Gastrocnemius medialis (tissue), 4 donors: ENCODE measurements at regions of chr1 and their contacts with region 1.

Region 1: DNA sequence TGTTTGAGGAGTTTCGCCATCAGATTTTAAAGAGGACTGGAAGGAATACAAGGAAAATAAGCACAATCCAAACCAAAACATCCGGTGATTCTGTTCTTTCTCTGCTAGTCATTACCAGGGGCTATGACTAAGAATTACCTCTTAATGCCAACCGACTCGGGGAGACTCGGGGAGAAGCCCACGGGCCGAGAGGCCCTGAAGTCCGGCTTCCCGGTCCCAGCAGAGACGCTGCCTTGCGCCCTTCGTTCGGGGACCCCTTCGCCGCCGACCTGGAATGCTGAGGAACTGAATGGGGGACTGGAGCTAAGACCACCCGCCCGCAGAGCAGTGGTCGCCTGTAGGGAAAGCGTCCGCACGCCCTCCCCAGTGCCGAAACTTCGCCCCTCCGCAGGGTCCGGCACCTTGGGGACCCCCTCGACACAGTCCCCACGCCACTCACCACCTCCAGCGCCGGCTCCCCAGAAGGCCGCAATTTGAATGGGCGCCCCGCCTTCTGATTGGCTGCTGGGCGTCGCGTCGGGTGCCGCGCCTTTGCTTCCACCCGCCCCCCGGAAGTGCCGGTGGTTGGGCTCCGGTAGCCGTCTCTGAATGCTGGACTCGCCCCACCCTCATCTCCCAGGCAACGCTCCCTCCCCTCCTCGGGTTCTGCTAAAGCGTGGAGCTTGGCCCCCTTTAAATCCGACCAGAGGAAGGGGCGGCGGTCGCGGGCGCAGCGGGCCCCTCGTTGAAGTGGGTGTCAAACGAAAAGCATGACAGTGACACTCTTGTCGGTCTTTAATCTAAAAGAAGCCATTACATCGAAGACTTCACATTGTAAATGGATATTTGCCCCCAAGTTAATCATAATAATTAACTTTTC is at the start of gene KIF14:
- DNase-seq: peak; percentile 82 to 83
- ATAC-seq: peak; percentile 96 to 98
- H3K4me3 ChIP-seq: peak within 1 kb of the TSS; percentile 74 to 78 (median 74)
- H3K27ac ChIP-seq: peak within 1 kb of the TSS; percentile 20 to 54 (median 46)
- H3K4me1 ChIP-seq: peaks cover 3 to 15% of the 10 kb centered on the region in 2 donors
- H3K27me3 ChIP-seq: no peaks in the 10 kb centered on the region
- CTCF ChIP-seq: no peak
- POLR2A ChIP-seq: no peak
- total RNA-seq, gene KIF14: 0.03 to 0.19 (median 0.07) TPM

Region 2: GRCh38 chr1:200409761-200410565 is 210.5 kb before region 1 on chr1 and contains the start of gene ZNF281:
- in situ Hi-C with region 1: no loop called
- intact Hi-C with region 1: loop called (anchors 5 kb)
- DNase-seq: peak; percentile 86 to 92
- ATAC-seq: peak; percentile 96
- H3K4me3 ChIP-seq: peak within 1 kb of the TSS; percentile 87 to 96 (median 95)
- H3K27ac ChIP-seq: peak within 1 kb of the TSS; percentile 90 to 96 (median 95)
- H3K4me1 ChIP-seq: peaks cover 45 to 51% of the 10 kb centered on the region in 2 donors
- H3K27me3 ChIP-seq: no peaks in the 10 kb centered on the region
- CTCF ChIP-seq: no peak
- POLR2A ChIP-seq: peak; percentile 76 to 80
- total RNA-seq, gene ZNF281: 4.9 to 12.4 (median 9.8) TPM

Region 3: GRCh38 chr1:200738740-200739498 is 118.4 kb after region 1 on chr1 and contains the start of gene CAMSAP2:
- in situ Hi-C with region 1: no loop called
- intact Hi-C with region 1: loop called (anchors 5 kb)
- DNase-seq: peak; percentile 65 to 78
- ATAC-seq: peak; percentile 88 to 91
- H3K4me3 ChIP-seq: peak within 1 kb of the TSS; percentile 71 to 98 (median 94)
- H3K27ac ChIP-seq: peak within 1 kb of the TSS; percentile 93 to 100 (median 98)
- H3K4me1 ChIP-seq: peaks cover 28 to 34% of the 10 kb centered on the region in 2 donors
- H3K27me3 ChIP-seq: no peaks in the 10 kb centered on the region
- CTCF ChIP-seq: no peak
- POLR2A ChIP-seq: peak; percentile 89 to 90
- total RNA-seq, gene CAMSAP2: 39.3 to 63.9 (median 54.2) TPM

Region 4: GRCh38 chr1:200802865-200803512 is 182.5 kb after region 1 on chr1:
- in situ Hi-C with region 1: loop called (anchors 5 to 10 kb)
- intact Hi-C with region 1: loop called (anchors 1 kb)
- DNase-seq: peak; percentile 29 to 59
- ATAC-seq: peak; percentile 72 to 88
- H3K4me3 ChIP-seq: no peak overlapping the region
- H3K27ac ChIP-seq: no peak overlapping the region
- H3K4me1 ChIP-seq: peaks cover 0 to 4% of the 10 kb centered on the region in 2 donors
- H3K27me3 ChIP-seq: no peaks in the 10 kb centered on the region
- CTCF ChIP-seq: peak; percentile 84 to 94 (median 88)
- POLR2A ChIP-seq: no peak

Region 5: DNA sequence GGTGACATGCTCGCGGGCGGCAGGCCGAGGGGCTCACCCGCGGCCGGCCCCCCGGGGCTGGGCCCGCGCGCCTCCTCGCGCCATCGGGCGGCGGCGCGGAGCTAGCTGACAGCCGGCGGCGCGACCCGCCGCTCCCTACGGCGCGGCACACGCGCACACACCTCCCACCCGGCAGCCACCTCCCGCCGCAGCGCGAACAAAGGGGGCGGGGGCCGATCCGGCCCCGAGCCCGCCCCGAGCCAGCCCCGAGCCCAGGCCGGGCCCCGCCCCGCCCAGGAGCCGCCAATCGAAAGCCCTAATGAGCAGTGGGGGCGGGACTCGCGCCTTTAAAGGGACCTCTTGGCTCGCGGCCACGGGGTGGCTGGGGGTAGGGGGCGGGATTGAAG is 403.0 kb after region 1 on chr1 and contains the start of gene KIF21B:
- in situ Hi-C with region 1: loop called in 1 of 4 experiments (anchors 25 kb)
- intact Hi-C with region 1: loop called (anchors 10 kb)
- DNase-seq: peak; percentile 46 to 51
- ATAC-seq: peak; percentile 38 to 63
- H3K4me3 ChIP-seq: peak within 1 kb of the TSS; percentile 49 to 57 (median 54)
- H3K27ac ChIP-seq: no peak within 1 kb of the TSS
- H3K4me1 ChIP-seq: peaks cover 17 to 28% of the 10 kb centered on the region in 2 donors
- H3K27me3 ChIP-seq: peaks cover 0 to 12% (median 0%) of the 10 kb centered on the region in 3 donors
- CTCF ChIP-seq: no peak
- POLR2A ChIP-seq: peak in 1 of 2 donors; percentile 8
- total RNA-seq, gene KIF21B: 0.23 to 0.49 (median 0.36) TPM